ENCODE measurements at regions of chr11 and their contacts with region 1.

Region 1: DNA sequence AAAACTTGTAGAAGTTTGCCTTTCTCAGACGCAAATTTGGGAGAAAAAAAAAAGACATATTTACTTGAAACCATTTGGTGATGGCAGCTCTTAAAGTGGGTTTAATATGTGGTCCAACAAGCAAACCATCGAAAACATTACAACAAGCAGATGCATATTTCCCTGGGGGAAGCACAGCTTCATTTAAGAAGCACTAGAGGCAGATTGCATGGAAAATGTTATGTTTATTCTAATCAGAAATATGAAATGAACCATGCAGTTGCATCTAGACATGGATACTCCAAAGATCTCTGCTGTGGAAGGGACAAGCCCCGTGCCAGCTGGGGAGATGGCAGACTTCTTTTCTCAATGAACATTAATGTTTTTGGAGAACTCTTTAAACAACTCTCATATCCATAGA is 57.4 kb upstream of the PARVA start:
- DNase-seq: no peak
- H3K4me3 ChIP-seq: no peak overlapping the region
- H3K27ac ChIP-seq: no peak overlapping the region
- H3K4me1 ChIP-seq: peaks cover 0 to 8% (median 4%) of the 10 kb centered on the region in 3 donors
- H3K27me3 ChIP-seq: no peaks in the 10 kb centered on the region
- CTCF ChIP-seq: no peak

Region 2: GRCh38 chr11:12372111-12372510 is 52.1 kb after region 1 on chr11:
- intact Hi-C with region 1: no loop called
- DNase-seq: no peak
- H3K4me3 ChIP-seq: no peak overlapping the region
- H3K27ac ChIP-seq: no peak overlapping the region
- H3K4me1 ChIP-seq: peaks cover 0 to 4% (median 3%) of the 10 kb centered on the region in 3 donors
- H3K27me3 ChIP-seq: no peaks in the 10 kb centered on the region
- CTCF ChIP-seq: no peak

Region 3: GRCh38 chr11:12430955-12431354 is 111.0 kb after region 1 on chr11:
- intact Hi-C with region 1: no loop called
- DNase-seq: no peak
- H3K4me3 ChIP-seq: no peak overlapping the region
- H3K27ac ChIP-seq: peak overlapping the region in 1 of 2 donors; percentile 34
- H3K4me1 ChIP-seq: peaks cover 3 to 12% (median 6%) of the 10 kb centered on the region in 3 donors
- H3K27me3 ChIP-seq: no peaks in the 10 kb centered on the region
- CTCF ChIP-seq: no peak

Region 4: GRCh38 chr11:12893787-12894672 is 574.0 kb after region 1 on chr11:
- intact Hi-C with region 1: loop called (anchors 10 kb)
- DNase-seq: peak in 4 of 5 donors; percentile 70 to 77 (median 75)
- H3K4me3 ChIP-seq: no peak overlapping the region
- H3K27ac ChIP-seq: no peak overlapping the region
- H3K4me1 ChIP-seq: peaks cover 0 to 5% (median 0%) of the 10 kb centered on the region in 3 donors
- H3K27me3 ChIP-seq: no peaks in the 10 kb centered on the region
- CTCF ChIP-seq: peak; percentile 77